ENCODE measurements at regions of chr22 and their contacts with region 1.

Region 1: GRCh38 chr22:36486619-36487384 is 5.4 kb upstream of the TXN2 start:
- DNase-seq: no peak
- H3K4me3 ChIP-seq: no peak overlapping the region
- H3K27ac ChIP-seq: no peak overlapping the region
- H3K27me3 ChIP-seq: no peaks in the 10 kb centered on the region
- CTCF ChIP-seq: peak; percentile 80

Region 2: GRCh38 chr22:36144886-36145541 is 341.8 kb before region 1 on chr22:
- CTCF ChIA-PET with region 1: interaction called, 28 read pairs
- POLR2A ChIA-PET with region 1: interaction called, 8 read pairs
- DNase-seq: peak; percentile 43
- H3K4me3 ChIP-seq: no peak overlapping the region
- H3K27ac ChIP-seq: peak overlapping the region; percentile 21
- H3K27me3 ChIP-seq: peaks cover 17% of the 10 kb centered on the region
- CTCF ChIP-seq: peak; percentile 94

Region 3: DNA sequence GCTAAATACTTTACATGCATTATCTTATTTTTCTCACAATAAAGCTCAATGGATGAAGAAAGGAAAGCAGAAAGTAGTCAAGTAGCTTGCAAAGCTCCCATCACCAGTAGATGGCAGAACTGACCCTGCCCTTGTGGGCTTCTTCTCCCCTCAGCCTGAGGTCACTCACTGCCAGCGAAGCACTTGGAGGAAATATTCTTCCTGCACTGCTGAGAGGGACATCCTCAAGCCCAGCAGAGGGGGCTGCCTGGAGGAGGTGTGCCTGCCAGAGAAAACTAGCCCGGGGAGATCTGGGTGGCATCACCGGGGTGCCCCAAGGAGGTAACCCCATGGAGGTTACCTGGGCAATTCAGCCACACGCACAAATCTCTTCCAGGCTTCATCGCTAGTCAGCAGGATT is 291.8 kb before region 1 on chr22:
- CTCF ChIA-PET with region 1: interaction called, 30 read pairs
- POLR2A ChIA-PET with region 1: no interaction called
- DNase-seq: peak; percentile 52
- H3K4me3 ChIP-seq: no peak overlapping the region
- H3K27ac ChIP-seq: no peak overlapping the region
- H3K27me3 ChIP-seq: peaks cover 12% of the 10 kb centered on the region
- CTCF ChIP-seq: peak; percentile 89

Region 4: GRCh38 chr22:36239401-36240171 is 247.2 kb before region 1 on chr22 and contains the start of gene APOL2:
- CTCF ChIA-PET with region 1: interaction called, 15 read pairs
- POLR2A ChIA-PET with region 1: no interaction called
- DNase-seq: peak; percentile 83
- H3K4me3 ChIP-seq: peak within 1 kb of the TSS; percentile 75
- H3K27ac ChIP-seq: peak within 1 kb of the TSS; percentile 83
- H3K27me3 ChIP-seq: no peaks in the 10 kb centered on the region
- CTCF ChIP-seq: peak; percentile 77
- polyA plus RNA-seq, gene APOL2: 18.8 and 19.7 TPM in 2 replicates

Region 5: GRCh38 chr22:36286471-36287224 is 200.2 kb before region 1 on chr22:
- CTCF ChIA-PET with region 1: interaction called, 10 read pairs
- POLR2A ChIA-PET with region 1: no interaction called
- DNase-seq: peak; percentile 56
- H3K4me3 ChIP-seq: no peak overlapping the region
- H3K27ac ChIP-seq: peak overlapping the region; percentile 52
- H3K27me3 ChIP-seq: no peaks in the 10 kb centered on the region
- CTCF ChIP-seq: peak; percentile 94

Region 6: DNA sequence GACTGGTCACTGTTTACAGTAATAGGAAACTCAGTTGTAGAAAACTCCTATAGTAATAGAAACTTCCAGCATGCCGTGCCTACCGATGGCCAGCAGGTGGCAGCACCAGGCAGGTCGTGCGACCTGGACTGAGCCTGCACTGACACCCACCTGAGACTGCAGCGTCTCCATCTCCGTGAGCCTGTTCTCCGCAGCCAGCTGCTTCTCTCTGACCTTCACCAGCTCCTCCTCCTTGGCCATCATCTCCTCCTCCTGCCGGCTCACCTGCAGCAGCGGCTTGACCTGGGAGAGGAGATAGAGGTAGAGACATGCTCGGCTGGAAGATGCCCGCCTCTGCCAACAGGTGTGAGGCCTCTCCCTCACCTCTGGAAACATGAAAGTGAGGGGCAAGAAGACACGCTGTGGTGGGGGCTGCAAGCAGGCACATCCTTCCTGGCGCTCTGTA is 185.4 kb before region 1 on chr22:
- CTCF ChIA-PET with region 1: interaction called, 19 read pairs
- POLR2A ChIA-PET with region 1: interaction called, 4 read pairs
- DNase-seq: peak; percentile 33
- H3K4me3 ChIP-seq: peak overlapping the region; percentile 18
- H3K27ac ChIP-seq: peak overlapping the region; percentile 99
- H3K27me3 ChIP-seq: no peaks in the 10 kb centered on the region
- CTCF ChIP-seq: peak; percentile 91